HEK293 (cell line): ENCODE measurements at regions of chr6 and their contacts with region 1.

Region 1: DNA sequence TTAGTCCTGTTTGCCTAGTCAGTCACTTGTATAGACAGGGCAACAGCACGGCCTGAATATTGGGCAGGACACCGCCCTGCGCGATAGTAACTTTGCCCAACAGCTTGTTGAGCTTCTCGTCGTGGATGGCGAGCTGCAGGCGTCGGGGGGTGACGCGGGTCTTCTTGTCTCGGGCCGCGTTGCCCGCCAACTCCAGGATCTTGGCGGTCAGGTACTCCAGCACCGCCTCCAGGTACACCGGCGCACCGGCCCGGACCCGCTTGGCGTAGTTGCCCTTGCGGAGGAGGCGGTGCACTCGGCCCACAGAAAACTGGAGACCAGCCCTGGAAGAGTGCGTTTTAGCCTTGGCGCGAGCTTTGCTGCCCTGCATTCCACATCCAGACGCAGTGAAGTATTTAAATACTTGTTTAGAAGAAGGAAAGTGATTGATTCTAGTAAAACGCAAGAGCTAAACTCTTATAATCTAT is 92.8 kb upstream of the BTN3A2 start:
- H3K4me3 ChIP-seq: no peak overlapping the region
- H3K27ac ChIP-seq: no peak overlapping the region
- H3K4me1 ChIP-seq: peaks cover 3% of the 10 kb centered on the region; the same call in 1 of the 2 replicates
- CTCF ChIP-seq: no peak

Region 2: GRCh38 chr6:26199057-26199772 is 73.0 kb before region 1 on chr6:
- CTCF ChIA-PET with region 1: no interaction called
- POLR2A ChIA-PET with region 1: no interaction called
- H3K4me3 ChIP-seq: peak overlapping the region; percentile 45
- H3K27ac ChIP-seq: no peak overlapping the region; the same call in 1 of the 2 replicates
- H3K4me1 ChIP-seq: no peaks in the 10 kb centered on the region
- CTCF ChIP-seq: no peak

Region 3: GRCh38 chr6:26258200-26258977 is 13.8 kb before region 1 on chr6:
- CTCF ChIA-PET with region 1: interaction called, 11 read pairs
- POLR2A ChIA-PET with region 1: no interaction called
- H3K4me3 ChIP-seq: no peak overlapping the region
- H3K27ac ChIP-seq: no peak overlapping the region
- H3K4me1 ChIP-seq: no peaks in the 10 kb centered on the region
- CTCF ChIP-seq: no peak